Naive thymus-derived CD4-positive, alpha-beta T cell (primary cell): ENCODE measurements at regions of chr10 and their contacts with region 1.

Region 1: DNA sequence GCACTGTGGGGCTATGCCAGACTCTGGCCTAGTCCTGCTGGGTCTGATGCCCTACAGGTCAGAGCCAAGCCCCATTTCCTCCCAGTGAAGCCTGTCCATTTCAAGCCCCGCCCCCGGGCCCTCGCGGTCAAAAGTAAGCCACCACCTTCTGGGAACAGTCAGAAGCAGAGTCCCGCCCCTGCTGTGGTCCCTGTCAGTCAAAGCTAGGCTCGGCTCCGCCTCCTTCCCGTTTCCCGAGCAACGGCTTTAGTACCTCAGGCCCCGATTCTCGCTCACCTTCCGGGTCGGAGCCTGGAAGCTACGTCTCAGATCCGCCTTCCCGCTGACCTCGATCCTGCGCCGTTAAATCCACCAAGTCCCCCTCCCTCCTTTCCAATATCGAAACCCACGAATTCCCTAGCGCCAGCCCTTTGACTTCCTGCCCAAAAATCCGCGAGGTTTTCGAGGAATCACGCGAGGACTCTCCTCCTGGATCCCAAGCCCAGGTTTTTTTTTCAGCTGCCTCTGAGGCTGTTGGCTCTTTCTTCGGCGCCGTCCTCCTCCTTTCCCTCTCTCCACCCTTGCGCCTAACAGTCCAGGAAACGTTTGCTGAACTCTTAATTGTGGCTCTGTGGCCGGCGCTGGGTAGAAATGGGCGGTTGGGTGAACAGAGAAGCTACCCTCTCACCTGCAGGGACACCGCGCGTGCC is 11.8 kb downstream of the SFXN3 start:
- DNase-seq: peak; percentile 49 to 86 (median 57)
- ATAC-seq: peak; percentile 87
- H3K4me3 ChIP-seq: peak overlapping the region; percentile 82
- H3K4me3 Mint-ChIP-seq: peak overlapping the region; percentile 86 to 99 (median 94)
- H3K27ac ChIP-seq: peak overlapping the region; percentile 67
- H3K27ac Mint-ChIP-seq: peak overlapping the region; percentile 81 to 96 (median 88)
- H3K4me1 ChIP-seq: peaks cover 5 to 14% of the 10 kb centered on the region in 2 donors
- H3K4me1 Mint-ChIP-seq: peaks cover 20 to 27% (median 24%) of the 10 kb centered on the region in 7 donors
- H3K27me3 ChIP-seq: no peaks in the 10 kb centered on the region
- H3K27me3 Mint-ChIP-seq: peaks cover 10 to 44% (median 21%) of the 10 kb centered on the region in 5 donors

Region 2: DNA sequence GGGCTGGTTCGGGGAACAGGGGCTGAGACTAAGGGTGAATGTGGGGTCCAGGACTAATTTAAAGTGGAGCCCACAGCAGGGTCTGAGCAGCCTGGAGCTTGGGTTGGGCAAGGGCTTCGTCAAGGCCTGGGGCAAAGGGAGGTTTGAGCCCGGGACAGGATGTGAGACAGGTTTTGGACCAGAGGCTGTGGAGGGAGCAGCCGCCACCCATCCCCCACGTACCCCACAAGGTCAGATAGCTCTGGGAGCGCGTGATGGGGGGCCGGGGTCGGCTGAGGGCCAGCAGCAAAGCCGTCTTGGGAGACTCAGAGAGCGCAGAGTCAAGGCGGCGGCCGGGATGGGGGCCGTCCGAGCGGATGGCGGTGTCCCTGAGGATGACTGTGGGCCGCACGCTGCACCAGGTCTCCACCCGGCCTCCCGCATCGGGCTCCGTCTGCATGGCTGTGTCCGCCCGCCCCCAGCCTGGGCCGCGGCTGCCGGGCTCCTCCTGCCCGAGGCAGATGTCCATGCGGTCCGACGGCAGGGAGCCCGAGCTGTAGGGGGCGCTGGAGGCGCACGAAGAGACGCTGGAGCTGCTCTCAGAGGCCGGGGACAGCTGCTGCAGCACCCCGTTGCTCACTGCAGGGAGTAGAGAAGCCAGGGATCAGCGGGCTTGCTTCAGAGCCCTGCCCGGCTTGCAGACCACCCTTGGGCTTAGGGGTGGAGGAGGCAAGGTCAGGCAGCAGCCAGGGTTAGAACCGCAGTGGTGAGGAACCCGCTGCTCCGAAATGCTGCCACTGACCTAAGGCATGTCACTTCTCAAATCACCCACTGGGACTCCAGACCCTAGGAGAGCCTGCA is 24.0 kb before region 1 on chr10:
- CTCF ChIA-PET with region 1: interaction called, 4 read pairs
- POLR2A ChIA-PET with region 1: no interaction called
- intact Hi-C with region 1: loop called in 1 of 2 experiments (anchors 1 kb)
- DNase-seq: peak in 8 of 9 donors; percentile 45 to 86 (median 56)
- ATAC-seq: peak; percentile 80
- H3K4me3 ChIP-seq: no peak overlapping the region
- H3K4me3 Mint-ChIP-seq: no peak overlapping the region
- H3K27ac ChIP-seq: no peak overlapping the region
- H3K27ac Mint-ChIP-seq: no peak overlapping the region
- H3K4me1 ChIP-seq: no peaks in the 10 kb centered on the region
- H3K4me1 Mint-ChIP-seq: peaks cover 0 to 20% (median 10%) of the 10 kb centered on the region in 7 donors
- H3K27me3 ChIP-seq: peaks cover 0 to 2% of the 10 kb centered on the region in 2 donors
- H3K27me3 Mint-ChIP-seq: peaks cover 47 to 53% (median 52%) of the 10 kb centered on the region in 5 donors

Region 3: GRCh38 chr10:101080933-101081931 is 38.4 kb after region 1 on chr10:
- CTCF ChIA-PET with region 1: no interaction called
- POLR2A ChIA-PET with region 1: no interaction called
- intact Hi-C with region 1: no loop called
- DNase-seq: no peak
- ATAC-seq: no peak
- H3K4me3 ChIP-seq: no peak overlapping the region
- H3K4me3 Mint-ChIP-seq: no peak overlapping the region
- H3K27ac ChIP-seq: no peak overlapping the region
- H3K27ac Mint-ChIP-seq: no peak overlapping the region
- H3K4me1 ChIP-seq: no peaks in the 10 kb centered on the region
- H3K4me1 Mint-ChIP-seq: no peaks in the 10 kb centered on the region
- H3K27me3 ChIP-seq: no peaks in the 10 kb centered on the region
- H3K27me3 Mint-ChIP-seq: peaks cover 36 to 62% (median 58%) of the 10 kb centered on the region in 5 donors

Region 4: DNA sequence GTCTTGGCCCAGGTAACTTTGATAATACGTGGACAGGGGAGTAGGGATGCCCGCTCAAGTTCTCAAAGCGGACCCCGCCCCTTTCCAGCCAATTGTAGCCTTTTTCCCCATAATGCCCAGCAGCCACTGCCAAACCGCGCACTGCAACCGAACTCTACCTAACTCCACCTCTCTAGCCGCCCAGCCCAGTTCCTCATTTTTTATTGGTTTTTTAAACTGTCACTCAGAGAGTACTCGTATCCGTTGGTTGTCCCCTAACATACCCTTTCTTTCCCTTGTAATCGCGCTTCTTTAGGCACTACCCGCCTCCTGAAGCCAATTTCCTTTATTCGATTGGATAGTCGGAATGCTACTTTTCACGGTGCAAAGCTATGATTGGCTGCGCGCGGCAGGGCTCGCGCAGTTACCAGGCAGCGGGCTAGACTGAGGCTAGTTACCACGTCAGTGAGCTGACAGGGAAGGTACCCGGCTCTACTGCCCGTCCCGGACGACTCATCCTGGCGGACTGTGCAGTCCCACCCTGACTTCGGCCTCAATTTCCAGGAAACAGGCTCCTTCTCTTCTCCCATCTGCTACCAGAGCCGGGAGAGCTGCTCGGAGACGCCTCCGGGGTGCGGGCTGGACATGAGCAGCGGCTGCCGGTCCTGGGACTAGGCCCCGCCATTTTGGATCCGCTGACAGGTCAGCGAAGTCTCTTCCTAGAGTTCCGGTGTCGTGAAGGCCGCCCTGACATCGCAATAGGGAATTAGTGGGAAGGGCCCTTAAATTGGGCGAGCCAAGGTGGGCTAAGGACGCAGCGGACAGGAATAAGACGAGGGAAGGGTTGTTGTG is 1202.5 kb after region 1 on chr10 and contains the start of gene GBF1:
- CTCF ChIA-PET with region 1: no interaction called
- POLR2A ChIA-PET with region 1: no interaction called
- intact Hi-C with region 1: no loop called
- DNase-seq: peak; percentile 69 to 97 (median 96)
- ATAC-seq: peak; percentile 92
- H3K4me3 ChIP-seq: peak within 1 kb of the TSS; percentile 84
- H3K4me3 Mint-ChIP-seq: peak within 1 kb of the TSS; percentile 83 to 100 (median 97)
- H3K27ac ChIP-seq: peak within 1 kb of the TSS; percentile 90
- H3K27ac Mint-ChIP-seq: peak within 1 kb of the TSS; percentile 65 to 98 (median 95)
- H3K4me1 ChIP-seq: peaks cover 17 to 37% of the 10 kb centered on the region in 2 donors
- H3K4me1 Mint-ChIP-seq: peaks cover 43 to 69% (median 54%) of the 10 kb centered on the region in 7 donors
- H3K27me3 ChIP-seq: peaks cover 0 to 16% of the 10 kb centered on the region in 2 donors
- H3K27me3 Mint-ChIP-seq: peaks cover 14 to 27% (median 22%) of the 10 kb centered on the region in 5 donors
- total RNA-seq, gene GBF1: 36.2 to 47.2 (median 37.8) TPM